Left cardiac atrium (tissue), 4 donors: ENCODE measurements at regions of chr20 and their contacts with region 1.

Region 1: GRCh38 chr20:62065669-62066338 is at the start of gene TAF4:
- DNase-seq: peak; percentile 76
- ATAC-seq: peak; percentile 62 to 81
- total RNA-seq, gene TAF4: 8.8 to 9.3 TPM

Region 2: GRCh38 chr20:62025832-62026563 is 39.8 kb before region 1 on chr20:
- intact Hi-C with region 1: loop called in 1 of 2 experiments (anchors 5 kb)
- DNase-seq: peak; percentile 47
- ATAC-seq: peak; percentile 76 to 83

Region 3: DNA sequence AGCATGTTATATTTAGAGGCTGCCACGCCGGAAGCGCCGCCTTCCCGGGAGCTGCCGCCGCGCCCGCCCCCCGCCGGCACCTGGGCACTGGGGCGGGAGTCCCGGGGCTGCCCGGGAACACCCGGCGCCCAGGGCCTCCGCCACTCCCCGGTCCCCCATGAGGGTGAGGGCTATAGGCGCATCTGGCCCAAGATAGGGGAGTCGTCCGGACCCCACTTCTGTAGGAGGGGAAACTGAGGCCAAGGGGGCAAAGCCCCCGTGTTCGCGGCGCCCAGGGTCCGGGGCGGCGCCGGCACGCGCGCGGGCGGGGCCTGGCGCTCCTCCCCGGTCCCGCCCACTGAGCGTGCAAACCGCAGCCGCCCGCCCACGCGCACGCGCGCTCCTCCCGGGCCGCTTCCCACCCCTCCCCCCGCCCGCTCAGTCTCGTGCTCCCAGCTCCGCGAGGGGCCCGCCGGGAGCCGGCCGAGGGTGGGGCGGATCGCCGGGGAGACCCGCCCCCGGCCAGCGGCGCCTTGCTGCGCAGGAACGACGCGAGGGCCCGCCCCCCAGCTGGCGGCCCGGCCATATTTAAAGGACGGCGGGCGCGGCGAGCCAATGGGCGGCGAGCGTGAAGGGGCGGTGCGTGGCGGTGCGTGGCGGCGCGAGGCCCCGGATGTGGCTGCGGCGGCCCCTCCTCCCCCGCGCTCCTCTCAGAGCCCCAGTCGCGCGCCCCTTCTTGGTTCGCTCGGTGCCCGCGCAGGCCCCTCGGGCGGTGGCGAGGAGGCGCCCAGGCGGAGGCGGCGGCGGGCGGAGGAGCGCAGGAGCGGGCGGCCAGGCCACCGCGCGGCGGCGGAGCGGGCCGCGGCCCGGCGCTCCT is 56.2 kb after region 1 on chr20 and contains the start of gene LSM14B:
- intact Hi-C with region 1: loop called in 1 of 2 experiments (anchors 10 kb)
- DNase-seq: peak; percentile 97
- ATAC-seq: peak; percentile 92 to 93
- total RNA-seq, gene LSM14B: 36.8 to 38.1 TPM

Region 4: DNA sequence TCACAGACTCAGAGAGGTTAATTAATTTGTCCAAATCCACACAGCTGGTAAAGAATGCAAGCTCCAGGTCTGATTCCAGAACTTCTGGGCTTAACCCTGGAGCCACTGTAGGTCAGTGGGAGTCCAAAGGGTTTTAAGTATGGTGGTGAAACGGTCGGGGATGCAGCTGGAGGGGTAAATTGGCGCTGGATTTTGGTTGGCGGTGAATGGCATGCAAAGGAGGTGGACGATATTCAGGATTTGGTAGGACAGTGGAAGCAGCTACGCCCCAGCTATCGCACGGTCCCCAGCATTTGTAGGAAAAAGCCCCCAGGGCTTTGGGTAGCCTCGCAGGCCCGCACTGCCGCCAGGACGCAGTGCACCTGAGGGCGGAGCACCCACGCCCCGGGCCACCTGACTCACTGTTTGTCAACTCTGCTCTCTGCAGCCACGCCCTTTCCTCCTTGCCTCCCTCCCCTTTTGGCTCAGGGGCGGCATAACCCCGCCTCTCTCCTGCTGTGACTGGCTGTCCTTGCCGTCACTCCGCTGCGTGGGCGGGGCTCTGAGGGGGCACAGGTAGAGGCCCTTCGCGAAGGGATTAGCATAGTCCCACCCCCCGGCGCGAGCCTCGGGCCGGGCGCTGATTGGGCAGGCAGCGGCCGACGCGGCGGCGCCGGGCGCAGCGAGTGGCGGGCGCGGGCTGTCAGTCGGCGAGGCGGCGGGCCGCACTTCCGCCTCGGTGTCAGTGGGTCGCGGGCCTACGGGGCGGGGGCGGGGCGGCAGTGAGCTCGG is 172.2 kb after region 1 on chr20 and contains the start of gene OSBPL2:
- intact Hi-C with region 1: no loop called
- DNase-seq: peak; percentile 99
- ATAC-seq: peak; percentile 98 to 99
- total RNA-seq, gene OSBPL2: 40.1 to 41.2 TPM

Region 5: GRCh38 chr20:62321521-62321948 is 255.7 kb after region 1 on chr20:
- intact Hi-C with region 1: no loop called
- DNase-seq: no peak
- ATAC-seq: peak; percentile 11 to 25